Heart left ventricle (tissue), 16 donors: ENCODE measurements at regions of chr3 and their contacts with region 1.

Region 1: DNA sequence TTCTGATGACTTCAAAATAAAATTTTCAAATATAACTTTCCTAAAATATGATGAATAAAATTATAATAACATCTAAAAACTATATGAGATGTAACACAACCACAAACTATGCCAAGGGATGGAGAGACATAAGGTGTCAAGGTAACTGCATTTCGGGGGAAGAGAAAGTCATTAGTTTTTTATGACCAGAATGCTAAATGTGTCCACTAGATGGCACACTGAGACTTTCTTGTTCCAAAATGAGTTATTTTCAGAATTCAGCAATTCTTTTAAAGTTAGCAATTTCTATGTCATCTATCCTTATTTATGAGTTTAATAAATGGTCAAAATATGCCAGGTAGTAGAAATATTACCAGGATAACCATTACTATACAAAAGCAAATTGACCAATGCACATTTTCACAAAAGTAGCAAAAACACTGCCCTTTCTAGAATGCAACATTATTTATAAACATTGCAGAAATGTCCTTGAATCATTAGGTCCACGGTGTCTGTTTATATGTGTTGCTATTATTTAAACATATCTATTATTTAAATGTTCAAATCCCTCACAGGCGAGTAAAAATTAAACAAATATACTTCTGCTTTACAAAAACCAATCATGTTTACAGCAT is 374.2 kb downstream of the PLCL2 start:
- DNase-seq: no peak
- ATAC-seq: no peak
- H3K4me3 ChIP-seq: no peak overlapping the region
- H3K27ac ChIP-seq: no peak overlapping the region
- H3K4me1 ChIP-seq: no peaks in the 10 kb centered on the region
- H3K27me3 ChIP-seq: no peaks in the 10 kb centered on the region
- CTCF ChIP-seq: peak; percentile 63 to 91 (median 79)
- POLR2A ChIP-seq: no peak

Region 2: GRCh38 chr3:17412950-17413530 is 154.1 kb after region 1 on chr3:
- intact Hi-C with region 1: loop called (anchors 2 to 5 kb)
- DNase-seq: no peak
- ATAC-seq: peak in 3 of 4 donors; percentile 41 to 64 (median 54)
- H3K4me3 ChIP-seq: no peak overlapping the region
- H3K27ac ChIP-seq: no peak overlapping the region
- H3K4me1 ChIP-seq: peaks cover 0 to 4% (median 0%) of the 10 kb centered on the region in 12 donors
- H3K27me3 ChIP-seq: no peaks in the 10 kb centered on the region
- CTCF ChIP-seq: peak; percentile 66 to 86 (median 80)
- POLR2A ChIP-seq: no peak

Region 3: GRCh38 chr3:17529677-17530076 is 270.7 kb after region 1 on chr3:
- intact Hi-C with region 1: no loop called
- DNase-seq: no peak
- ATAC-seq: no peak
- H3K4me3 ChIP-seq: no peak overlapping the region
- H3K27ac ChIP-seq: no peak overlapping the region
- H3K4me1 ChIP-seq: peaks cover 0 to 8% (median 2%) of the 10 kb centered on the region in 12 donors
- H3K27me3 ChIP-seq: no peaks in the 10 kb centered on the region
- CTCF ChIP-seq: no peak
- POLR2A ChIP-seq: no peak

Region 4: DNA sequence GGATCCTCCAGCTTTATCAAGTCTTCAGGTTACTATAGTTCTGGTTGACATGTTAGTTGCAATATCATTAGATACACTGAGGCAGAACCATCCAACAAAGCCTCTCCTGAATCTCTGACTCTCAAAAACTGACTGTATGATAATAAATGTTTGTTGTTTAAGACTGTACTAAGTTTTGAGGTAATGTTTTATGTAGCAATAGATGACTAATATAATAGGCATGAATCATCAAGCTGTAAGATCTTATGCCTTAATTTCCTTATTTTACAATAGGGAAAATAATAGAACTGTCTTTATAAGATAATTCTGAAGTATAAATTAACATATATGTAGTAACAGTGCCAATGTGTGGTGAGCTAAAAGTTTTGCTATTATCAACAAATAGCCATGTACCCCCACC is 572.4 kb after region 1 on chr3:
- intact Hi-C with region 1: loop called in 2 of 10 experiments (anchors 10 kb)
- DNase-seq: no peak
- ATAC-seq: no peak
- H3K4me3 ChIP-seq: no peak overlapping the region
- H3K27ac ChIP-seq: no peak overlapping the region
- H3K4me1 ChIP-seq: no peaks in the 10 kb centered on the region
- H3K27me3 ChIP-seq: no peaks in the 10 kb centered on the region
- CTCF ChIP-seq: no peak
- POLR2A ChIP-seq: no peak